GM12878 (cell line): ENCODE measurements at regions of chr20 and their contacts with region 1.

Region 1: GRCh38 chr20:43942661-43943290 is 28.1 kb downstream of the TOX2 start:
- DNase-seq: no peak
- ATAC-seq: peak; percentile 74
- H3K4me3 ChIP-seq: peak overlapping the region; percentile 50; the same call in 1 of the 2 replicates
- H3K27ac ChIP-seq: peak overlapping the region; percentile 84
- H3K4me1 ChIP-seq: peaks cover 19% of the 10 kb centered on the region
- H3K27me3 ChIP-seq: no peaks in the 10 kb centered on the region
- CTCF ChIP-seq: no peak
- EP300 ChIP-seq: peak in 1 of 2 experiments; percentile 41; a peak in 2 of 4 replicates
- POLR2A ChIP-seq: no peak
- RAD21 ChIP-seq: no peak

Region 2: GRCh38 chr20:43840382-43841070 is 102.2 kb before region 1 on chr20:
- CTCF ChIA-PET with region 1: interaction called, 3 read pairs
- POLR2A ChIA-PET with region 1: no interaction called
- RAD21 ChIA-PET with region 1: interaction called, 3 read pairs
- SMC1A ChIA-PET with region 1: interaction called, 16 read pairs
- in situ Hi-C with region 1: no loop called
- intact Hi-C with region 1: no loop called
- DNase-seq: no peak
- ATAC-seq: peak; percentile 78
- H3K4me3 ChIP-seq: no peak overlapping the region
- H3K27ac ChIP-seq: peak overlapping the region; percentile 23; the same call in 1 of the 2 replicates
- H3K4me1 ChIP-seq: peaks cover 37% of the 10 kb centered on the region
- H3K27me3 ChIP-seq: no peaks in the 10 kb centered on the region
- CTCF ChIP-seq: peak; percentile 35 to 70 (median 51)
- EP300 ChIP-seq: no peak
- POLR2A ChIP-seq: no peak
- RAD21 ChIP-seq: peak; percentile 70

Region 3: DNA sequence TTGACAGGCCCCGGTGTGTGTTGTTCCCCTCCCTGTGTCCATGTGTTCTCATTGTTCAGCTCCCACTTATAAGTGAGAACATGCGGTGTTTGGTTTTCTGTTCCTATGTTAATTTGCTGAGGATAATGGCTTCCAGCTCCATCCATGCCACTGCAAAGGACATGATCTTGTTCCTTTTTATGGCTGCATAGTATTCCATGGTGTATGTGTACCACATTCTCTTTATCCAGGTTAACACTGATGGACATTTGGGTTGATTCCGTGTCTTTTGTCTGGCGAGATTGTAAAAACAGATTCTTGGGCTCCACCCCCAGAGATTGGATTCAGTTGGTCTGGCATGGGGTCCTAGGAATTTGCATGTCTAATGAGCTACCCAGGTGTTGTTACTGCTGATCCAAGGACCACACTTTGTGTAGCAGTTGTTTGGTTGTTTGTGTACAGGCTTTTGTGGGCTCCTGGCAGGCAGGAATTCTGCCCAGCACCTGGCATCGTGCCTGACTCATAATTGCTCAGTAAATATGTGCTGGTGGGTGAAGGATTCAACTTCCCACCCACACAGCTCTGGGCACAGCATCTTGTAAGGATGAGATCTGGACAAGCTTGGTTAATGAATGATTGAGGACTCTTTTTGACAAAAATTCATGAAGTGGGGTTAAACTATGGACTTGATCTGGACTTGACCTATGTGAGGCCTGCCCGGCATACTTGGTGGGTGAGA is 22.9 kb before region 1 on chr20:
- CTCF ChIA-PET with region 1: interaction called, 69 read pairs
- POLR2A ChIA-PET with region 1: interaction called, 13 read pairs
- RAD21 ChIA-PET with region 1: interaction called, 63 read pairs
- SMC1A ChIA-PET with region 1: interaction called, 110 read pairs
- in situ Hi-C with region 1: no loop called
- intact Hi-C with region 1: no loop called
- DNase-seq: no peak
- ATAC-seq: no peak
- H3K4me3 ChIP-seq: no peak overlapping the region
- H3K27ac ChIP-seq: no peak overlapping the region
- H3K4me1 ChIP-seq: peaks cover 43% of the 10 kb centered on the region
- H3K27me3 ChIP-seq: peaks cover 0 to 4% of the 10 kb centered on the region in 2 experiments; a peak in 2 of 4 replicates
- CTCF ChIP-seq: no peak
- EP300 ChIP-seq: no peak
- POLR2A ChIP-seq: no peak
- RAD21 ChIP-seq: no peak

Region 4: DNA sequence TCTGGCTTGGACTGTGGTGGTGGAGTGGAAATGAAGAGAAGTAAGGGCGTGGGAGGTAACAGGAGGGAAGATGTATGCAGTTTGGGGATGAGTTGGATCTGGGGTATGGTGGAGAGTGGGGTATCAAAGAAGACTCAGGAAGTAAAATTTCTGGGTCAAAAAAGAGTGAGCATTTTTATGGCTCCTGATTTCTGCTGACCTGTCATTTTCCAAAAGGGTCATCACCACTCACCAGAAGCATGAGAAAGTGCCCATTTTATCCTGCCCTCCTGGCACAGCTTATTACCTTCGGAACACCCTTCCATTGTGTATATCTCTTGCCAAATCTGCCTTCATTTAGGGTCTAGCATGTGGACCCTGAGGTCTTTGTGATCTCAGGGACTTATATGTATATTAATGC is 10.8 kb before region 1 on chr20:
- CTCF ChIA-PET with region 1: interaction called, 69 read pairs
- POLR2A ChIA-PET with region 1: interaction called, 12 read pairs
- RAD21 ChIA-PET with region 1: interaction called, 63 read pairs
- SMC1A ChIA-PET with region 1: interaction called, 110 read pairs
- in situ Hi-C with region 1: no loop called
- intact Hi-C with region 1: no loop called
- DNase-seq: no peak
- ATAC-seq: no peak
- H3K4me3 ChIP-seq: no peak overlapping the region
- H3K27ac ChIP-seq: no peak overlapping the region
- H3K4me1 ChIP-seq: 0 out of 2 replicates have a peak, but pooled peaks cover 2% of the 10 kb centered on the region
- H3K27me3 ChIP-seq: no peaks in the 10 kb centered on the region
- CTCF ChIP-seq: no peak
- EP300 ChIP-seq: no peak
- POLR2A ChIP-seq: no peak
- RAD21 ChIP-seq: no peak

Region 5: DNA sequence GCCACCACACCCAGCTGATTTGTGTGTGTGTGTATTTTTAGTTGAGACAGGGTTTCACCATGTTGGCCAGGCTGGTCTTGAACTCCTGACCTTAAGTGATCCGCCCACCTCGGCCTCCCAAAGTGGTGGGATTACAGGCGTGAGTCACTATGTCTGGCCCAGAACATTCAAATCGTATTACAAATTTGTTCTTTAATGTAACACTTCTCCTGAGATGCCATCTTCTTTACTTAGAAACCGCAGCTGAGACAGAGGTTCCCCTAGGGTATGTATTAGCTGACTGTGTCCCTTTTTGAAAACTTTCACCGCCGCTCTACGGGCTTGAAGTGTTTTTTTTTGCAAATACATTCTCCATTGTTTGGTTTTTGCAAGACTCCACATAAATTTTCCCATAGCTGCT is 34.5 kb after region 1 on chr20:
- CTCF ChIA-PET with region 1: interaction called, 4 read pairs
- POLR2A ChIA-PET with region 1: interaction called, 4 read pairs
- RAD21 ChIA-PET with region 1: interaction called, 5 read pairs
- SMC1A ChIA-PET with region 1: interaction called, 20 read pairs
- in situ Hi-C with region 1: no loop called
- intact Hi-C with region 1: no loop called
- DNase-seq: no peak
- ATAC-seq: no peak
- H3K4me3 ChIP-seq: no peak overlapping the region
- H3K27ac ChIP-seq: no peak overlapping the region
- H3K4me1 ChIP-seq: no peaks in the 10 kb centered on the region
- H3K27me3 ChIP-seq: no peaks in the 10 kb centered on the region
- CTCF ChIP-seq: no peak
- EP300 ChIP-seq: no peak
- POLR2A ChIP-seq: no peak
- RAD21 ChIP-seq: no peak

Region 6: GRCh38 chr20:44028868-44029847 is 86.4 kb after region 1 on chr20:
- CTCF ChIA-PET with region 1: no interaction called
- POLR2A ChIA-PET with region 1: no interaction called
- RAD21 ChIA-PET with region 1: interaction called, 10 read pairs
- SMC1A ChIA-PET with region 1: no interaction called
- in situ Hi-C with region 1: no loop called
- intact Hi-C with region 1: no loop called
- DNase-seq: peak; percentile 66
- ATAC-seq: peak; percentile 96
- H3K4me3 ChIP-seq: no peak overlapping the region
- H3K27ac ChIP-seq: peak overlapping the region; percentile 35; the same call in 1 of the 2 replicates
- H3K4me1 ChIP-seq: peaks cover 21% of the 10 kb centered on the region
- H3K27me3 ChIP-seq: no peaks in the 10 kb centered on the region
- CTCF ChIP-seq: no peak
- EP300 ChIP-seq: peak; percentile 56 to 58; a peak in 1 of 4 replicates
- POLR2A ChIP-seq: no peak
- RAD21 ChIP-seq: no peak